ENCODE measurements at regions of chr5 and their contacts with region 1.

Region 1: DNA sequence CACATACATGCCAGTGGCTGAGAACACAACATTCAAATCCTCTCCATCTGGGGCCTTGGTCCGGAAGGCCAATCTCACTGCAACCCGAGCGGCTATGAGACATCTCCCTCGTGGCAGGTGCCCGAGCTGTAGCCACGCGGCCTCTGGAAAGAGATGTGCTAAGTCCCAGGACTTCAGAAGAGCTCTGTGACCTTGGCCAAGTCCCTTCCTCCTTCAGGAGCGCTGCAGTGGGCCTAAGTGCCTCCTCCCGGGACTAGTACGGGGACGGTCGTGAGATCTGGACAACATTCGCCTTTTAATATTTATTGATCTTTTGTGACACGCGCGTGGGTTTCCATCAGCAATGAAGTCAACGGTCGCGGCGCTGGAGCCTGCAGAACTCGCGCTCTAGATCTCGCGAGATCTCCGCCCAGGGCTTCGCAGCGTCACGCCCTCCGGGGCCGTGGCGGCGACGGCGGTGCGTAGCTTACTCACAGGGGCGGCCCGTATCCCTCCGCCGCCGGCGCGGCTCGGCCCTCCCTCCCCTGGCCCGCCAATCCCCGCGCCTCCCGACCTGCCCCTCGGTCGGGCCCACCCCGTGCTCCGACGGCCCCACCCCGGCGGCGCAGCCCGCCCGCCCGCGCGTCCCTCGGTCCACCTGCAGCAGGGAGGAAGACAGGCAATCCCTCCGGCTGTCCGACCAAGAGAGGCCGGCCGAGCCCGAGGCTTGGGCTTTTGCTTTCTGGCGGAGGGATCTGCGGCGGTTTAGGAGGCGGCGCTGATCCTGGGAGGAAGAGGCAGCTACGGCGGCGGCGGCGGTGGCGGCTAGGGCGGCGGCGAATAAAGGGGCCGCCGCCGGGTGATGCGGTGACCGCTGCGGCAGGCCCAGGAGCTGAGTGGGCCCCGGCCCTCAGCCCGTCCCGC is at the start of gene UBE2D2:
- DNase-seq: peak; percentile 98
- H3K4me3 ChIP-seq: peak within 1 kb of the TSS; percentile 69 to 87 (median 75)
- H3K27ac ChIP-seq: peak within 1 kb of the TSS; percentile 65
- H3K4me1 ChIP-seq: peaks cover 7% of the 10 kb centered on the region
- H3K27me3 ChIP-seq: no peaks in the 10 kb centered on the region
- CTCF ChIP-seq: no peak
- total RNA-seq, gene UBE2D2: 47.0 to 141 TPM

Region 2: DNA sequence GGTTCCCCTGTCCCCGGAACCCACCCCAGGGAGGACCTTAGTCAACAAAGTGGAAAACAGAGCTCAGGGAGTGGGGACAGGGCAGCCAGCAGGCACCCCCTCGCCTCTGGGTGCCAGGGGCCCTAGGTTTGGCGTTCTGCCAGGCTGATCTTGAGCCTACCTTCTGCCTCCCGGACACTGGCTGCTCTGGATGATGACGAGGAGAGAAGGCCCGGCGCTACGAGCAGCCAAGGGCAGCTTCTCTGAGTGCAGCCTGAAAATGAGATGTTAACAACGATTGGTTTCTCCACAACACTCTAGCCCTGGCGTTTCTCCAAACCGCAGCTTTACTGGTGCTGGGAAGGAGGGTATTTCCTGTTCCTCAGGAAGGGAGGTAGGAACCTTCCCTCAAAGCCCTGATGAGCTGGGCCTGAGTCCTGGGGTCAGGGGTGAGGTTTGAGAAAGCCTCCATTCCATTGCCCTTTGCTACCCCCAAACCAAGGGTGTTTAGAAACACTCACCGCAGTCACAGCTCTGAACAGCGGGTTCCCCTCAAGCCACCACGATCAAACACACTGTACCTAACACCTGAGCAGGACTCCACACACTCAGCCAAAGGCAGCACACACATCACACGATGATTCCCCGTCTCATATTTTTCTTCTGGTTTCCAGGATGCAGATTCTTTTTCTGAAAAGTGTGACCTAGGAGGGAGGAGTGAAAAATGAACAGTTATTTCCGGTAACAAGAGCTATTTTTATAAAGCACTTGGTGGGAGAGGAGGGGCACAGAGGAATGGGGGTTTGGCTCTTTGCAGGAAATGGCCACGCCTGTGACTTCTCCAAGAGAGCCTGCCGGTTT is 78.7 kb before region 1 on chr5 and contains the start of gene STING1:
- CTCF ChIA-PET with region 1: no interaction called
- dilution Hi-C with region 1: no loop called
- in situ Hi-C with region 1: no loop called
- intact Hi-C with region 1: no loop called
- DNase-seq: peak; percentile 97
- H3K4me3 ChIP-seq: peak within 1 kb of the TSS; percentile 19 to 44 (median 37)
- H3K27ac ChIP-seq: peak within 1 kb of the TSS; percentile 58
- H3K4me1 ChIP-seq: peaks cover 22% of the 10 kb centered on the region
- H3K27me3 ChIP-seq: no peaks in the 10 kb centered on the region
- CTCF ChIP-seq: no peak
- total RNA-seq, gene STING1: 10.7 to 36.6 TPM

Region 3: DNA sequence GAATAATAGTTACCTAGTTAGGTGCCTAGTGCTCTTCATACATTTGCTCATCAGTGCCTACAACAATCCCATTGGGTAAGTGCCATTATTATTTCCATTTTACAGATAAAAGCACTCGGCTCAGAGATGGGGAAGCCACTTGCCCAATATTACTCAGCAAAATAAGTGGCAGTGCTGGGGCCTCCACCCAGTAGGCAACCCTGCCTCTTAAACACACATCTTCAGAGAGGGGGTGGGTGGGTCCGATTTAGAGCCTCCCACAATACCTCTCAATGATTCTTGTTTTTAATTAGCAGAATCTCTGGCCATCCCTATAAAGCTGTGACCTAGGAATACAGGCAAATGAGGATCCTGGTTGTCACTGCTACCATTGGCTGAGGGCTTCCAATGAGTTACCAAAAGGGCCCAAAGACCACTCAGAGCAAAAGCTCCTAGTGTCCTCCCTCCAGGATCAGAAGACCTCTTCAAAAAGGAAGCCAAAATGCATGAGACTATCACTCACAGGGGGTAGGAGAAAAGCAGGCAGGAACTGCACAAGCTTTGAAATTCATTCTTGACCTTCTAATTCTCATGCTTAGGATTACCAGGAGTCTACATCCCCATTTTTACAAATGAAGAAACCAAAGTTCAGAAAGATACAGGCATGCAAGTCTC is 35.9 kb before region 1 on chr5:
- CTCF ChIA-PET with region 1: no interaction called
- dilution Hi-C with region 1: no loop called
- in situ Hi-C with region 1: no loop called
- intact Hi-C with region 1: no loop called
- DNase-seq: no peak
- H3K4me3 ChIP-seq: no peak overlapping the region
- H3K27ac ChIP-seq: no peak overlapping the region
- H3K4me1 ChIP-seq: no peaks in the 10 kb centered on the region
- H3K27me3 ChIP-seq: no peaks in the 10 kb centered on the region
- CTCF ChIP-seq: no peak

Region 4: GRCh38 chr5:139593716-139594319 is 32.8 kb after region 1 on chr5:
- CTCF ChIA-PET with region 1: no interaction called
- dilution Hi-C with region 1: no loop called
- in situ Hi-C with region 1: no loop called
- intact Hi-C with region 1: loop called (anchors 1 kb)
- DNase-seq: peak; percentile 62
- H3K4me3 ChIP-seq: peak overlapping the region in 1 of 3 experiments; percentile 24
- H3K27ac ChIP-seq: peak overlapping the region; percentile 88
- H3K4me1 ChIP-seq: peaks cover 6% of the 10 kb centered on the region
- H3K27me3 ChIP-seq: no peaks in the 10 kb centered on the region
- CTCF ChIP-seq: no peak

Measured in mammary epithelial cell (primary cell).